ENCODE measurements at regions of chr22 and their contacts with region 1.

Region 1: GRCh38 chr22:31661851-31662656 is at the start of gene PISD:
- DNase-seq: peak; percentile 96
- H3K4me3 ChIP-seq: peak within 1 kb of the TSS; percentile 69 to 92 (median 90)
- H3K27ac ChIP-seq: peak within 1 kb of the TSS; percentile 63
- H3K4me1 ChIP-seq: peaks cover 11% of the 10 kb centered on the region
- H3K27me3 ChIP-seq: no peaks in the 10 kb centered on the region
- CTCF ChIP-seq: no peak
- POLR2A ChIP-seq: peak; percentile 68
- total RNA-seq, gene PISD: 53.2 and 58.0 TPM in 2 replicates

Region 2: DNA sequence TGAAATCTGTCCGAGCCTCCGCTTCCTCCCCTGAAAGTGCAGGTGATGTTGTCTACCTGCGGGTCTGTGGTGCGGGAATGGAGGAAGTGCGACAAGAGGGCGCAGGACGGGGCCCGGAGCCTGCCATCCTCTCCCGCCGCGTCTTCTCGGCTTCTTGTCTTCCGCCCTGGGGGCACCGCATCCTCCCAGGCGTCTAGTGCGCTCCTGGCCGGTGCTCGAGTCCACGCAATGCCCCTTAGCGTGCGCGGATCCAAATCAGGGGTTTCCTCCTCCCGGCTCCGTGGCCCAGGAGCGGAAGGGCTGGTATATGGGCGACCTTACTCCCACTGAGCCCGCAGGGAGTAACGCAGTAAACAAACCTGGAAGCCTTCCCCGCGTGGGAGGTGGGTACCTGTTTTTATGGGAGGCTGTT is 165.3 kb before region 1 on chr22:
- CTCF ChIA-PET with region 1: no interaction called
- POLR2A ChIA-PET with region 1: no interaction called
- dilution Hi-C with region 1: no loop called
- intact Hi-C with region 1: no loop called
- DNase-seq: no peak
- H3K4me3 ChIP-seq: peak overlapping the region; percentile 60 to 85 (median 81)
- H3K27ac ChIP-seq: peak overlapping the region; percentile 36
- H3K4me1 ChIP-seq: peaks cover 11% of the 10 kb centered on the region
- H3K27me3 ChIP-seq: no peaks in the 10 kb centered on the region
- CTCF ChIP-seq: no peak
- POLR2A ChIP-seq: no peak

Region 3: GRCh38 chr22:31561238-31561887 is 100.7 kb before region 1 on chr22:
- CTCF ChIA-PET with region 1: interaction called, 18 read pairs
- POLR2A ChIA-PET with region 1: no interaction called
- dilution Hi-C with region 1: no loop called
- intact Hi-C with region 1: no loop called
- DNase-seq: peak; percentile 78
- H3K4me3 ChIP-seq: no peak overlapping the region
- H3K27ac ChIP-seq: no peak overlapping the region
- H3K4me1 ChIP-seq: peaks cover 2% of the 10 kb centered on the region
- H3K27me3 ChIP-seq: no peaks in the 10 kb centered on the region
- CTCF ChIP-seq: peak; percentile 80 to 91
- POLR2A ChIP-seq: no peak

Region 4: GRCh38 chr22:31676700-31677099 is 14.6 kb after region 1 on chr22:
- CTCF ChIA-PET with region 1: interaction called, 42 read pairs
- POLR2A ChIA-PET with region 1: interaction called, 3 read pairs
- dilution Hi-C with region 1: no loop called
- intact Hi-C with region 1: loop called (anchors 2 kb)
- DNase-seq: peak; percentile 93
- H3K4me3 ChIP-seq: peak overlapping the region; percentile 31 to 53 (median 34)
- H3K27ac ChIP-seq: peak overlapping the region; percentile 63
- H3K4me1 ChIP-seq: peaks cover 4% of the 10 kb centered on the region
- H3K27me3 ChIP-seq: no peaks in the 10 kb centered on the region
- CTCF ChIP-seq: no peak
- POLR2A ChIP-seq: peak; percentile 44

Region 5: DNA sequence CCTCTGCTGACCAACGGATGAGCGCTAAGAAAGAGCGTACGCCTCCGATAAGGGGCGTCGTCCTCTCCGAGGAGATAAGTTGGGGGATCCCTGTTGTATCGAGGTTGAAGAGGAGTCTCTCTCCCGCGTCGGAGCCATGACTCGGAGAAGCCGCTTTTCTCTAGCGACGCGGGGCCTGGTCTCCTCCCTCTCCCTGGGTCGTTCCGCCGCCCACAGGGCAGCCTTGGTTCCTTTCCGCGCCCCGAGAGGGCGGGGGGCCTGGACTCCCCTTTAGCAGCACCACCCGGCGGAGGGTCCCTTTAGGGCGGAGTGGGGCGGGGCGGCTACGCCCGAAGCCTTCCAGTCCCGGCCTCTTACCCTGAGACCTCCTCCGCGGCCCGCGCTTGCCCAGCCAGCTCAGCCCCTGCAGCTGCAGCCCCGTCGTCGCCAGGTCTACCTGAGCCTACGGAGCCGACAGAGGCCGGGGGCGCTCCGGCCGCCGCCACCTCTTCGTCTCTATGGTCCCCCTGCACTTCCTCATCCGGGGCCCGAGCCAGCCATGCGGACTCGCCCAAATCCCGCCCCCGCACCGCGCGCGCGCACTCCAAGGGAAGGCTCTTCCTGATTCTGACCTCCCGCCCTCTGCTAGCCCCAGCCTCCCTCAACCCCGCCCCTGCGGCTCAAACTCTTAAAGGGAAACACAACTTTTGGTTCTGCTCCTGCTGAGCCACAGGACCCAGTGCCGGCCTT is 87.7 kb after region 1 on chr22 and contains the start of gene PRR14L:
- CTCF ChIA-PET with region 1: interaction called, 5 read pairs
- POLR2A ChIA-PET with region 1: no interaction called
- dilution Hi-C with region 1: no loop called
- intact Hi-C with region 1: loop called (anchors 1 kb)
- DNase-seq: peak; percentile 96
- H3K4me3 ChIP-seq: peak within 1 kb of the TSS; percentile 75 to 89 (median 82)
- H3K27ac ChIP-seq: peak within 1 kb of the TSS; percentile 66
- H3K4me1 ChIP-seq: peaks cover 37% of the 10 kb centered on the region
- H3K27me3 ChIP-seq: no peaks in the 10 kb centered on the region
- CTCF ChIP-seq: no peak
- POLR2A ChIP-seq: peak; percentile 93
- total RNA-seq, gene PRR14L: 47.5 and 53.8 TPM in 2 replicates

Region 6: GRCh38 chr22:31952459-31952858 is 290.4 kb after region 1 on chr22:
- CTCF ChIA-PET with region 1: interaction called, 26 read pairs
- POLR2A ChIA-PET with region 1: no interaction called
- dilution Hi-C with region 1: no loop called
- intact Hi-C with region 1: loop called (anchors 1 kb)
- DNase-seq: peak; percentile 89
- H3K4me3 ChIP-seq: no peak overlapping the region
- H3K27ac ChIP-seq: peak overlapping the region; percentile 74
- H3K4me1 ChIP-seq: peaks cover 45% of the 10 kb centered on the region
- H3K27me3 ChIP-seq: no peaks in the 10 kb centered on the region
- CTCF ChIP-seq: no peak
- POLR2A ChIP-seq: no peak